ENCODE measurements at regions of chr15 and their contacts with region 1.

Region 1: GRCh38 chr15:29465196-29465595 is 195.6 kb upstream of the NSMCE3 start:
- DNase-seq: no peak
- H3K4me3 ChIP-seq: no peak overlapping the region
- H3K27ac ChIP-seq: no peak overlapping the region
- H3K4me1 ChIP-seq: no peaks in the 10 kb centered on the region
- H3K27me3 ChIP-seq: peaks cover 23% of the 10 kb centered on the region
- CTCF ChIP-seq: no peak

Region 2: DNA sequence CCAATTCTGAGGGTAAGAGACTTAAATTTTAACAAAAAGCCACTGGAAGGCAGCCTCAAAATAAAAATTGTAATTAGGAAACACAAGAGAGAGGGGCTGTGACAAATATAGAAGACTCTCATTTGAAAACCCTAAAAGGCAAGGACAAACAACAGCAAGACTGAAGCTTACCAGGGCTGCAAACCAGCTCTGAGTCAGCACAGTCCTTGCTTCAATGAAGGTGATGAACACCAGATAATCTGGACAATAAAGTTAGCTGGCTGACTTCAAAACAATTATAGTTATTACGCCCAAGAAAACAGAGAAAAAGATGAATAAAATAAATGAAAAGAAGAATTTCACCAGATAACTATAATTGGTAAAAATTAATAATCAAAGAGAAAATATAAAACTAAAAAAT is 46.3 kb before region 1 on chr15:
- CTCF ChIA-PET with region 1: no interaction called
- POLR2A ChIA-PET with region 1: no interaction called
- intact Hi-C with region 1: loop called (anchors 1 kb)
- DNase-seq: no peak
- H3K4me3 ChIP-seq: no peak overlapping the region
- H3K27ac ChIP-seq: no peak overlapping the region
- H3K4me1 ChIP-seq: no peaks in the 10 kb centered on the region
- H3K27me3 ChIP-seq: no peaks in the 10 kb centered on the region
- CTCF ChIP-seq: no peak